Activated naive CD4-positive, alpha-beta T cell treated with anti-CD3 and anti-CD28 coated beads for 36 hours (primary cell): ENCODE measurements at regions of chr2 and their contacts with region 1.

Region 1: GRCh38 chr2:44955593-44956392 is 14.3 kb downstream of the SIX3 start:
- DNase-seq: peak; percentile 87
- H3K4me3 Mint-ChIP-seq: no peak overlapping the region
- H3K27ac Mint-ChIP-seq: no peak overlapping the region
- H3K4me1 Mint-ChIP-seq: peaks cover 18% of the 10 kb centered on the region
- H3K27me3 Mint-ChIP-seq: peaks cover 54% of the 10 kb centered on the region

Region 2: DNA sequence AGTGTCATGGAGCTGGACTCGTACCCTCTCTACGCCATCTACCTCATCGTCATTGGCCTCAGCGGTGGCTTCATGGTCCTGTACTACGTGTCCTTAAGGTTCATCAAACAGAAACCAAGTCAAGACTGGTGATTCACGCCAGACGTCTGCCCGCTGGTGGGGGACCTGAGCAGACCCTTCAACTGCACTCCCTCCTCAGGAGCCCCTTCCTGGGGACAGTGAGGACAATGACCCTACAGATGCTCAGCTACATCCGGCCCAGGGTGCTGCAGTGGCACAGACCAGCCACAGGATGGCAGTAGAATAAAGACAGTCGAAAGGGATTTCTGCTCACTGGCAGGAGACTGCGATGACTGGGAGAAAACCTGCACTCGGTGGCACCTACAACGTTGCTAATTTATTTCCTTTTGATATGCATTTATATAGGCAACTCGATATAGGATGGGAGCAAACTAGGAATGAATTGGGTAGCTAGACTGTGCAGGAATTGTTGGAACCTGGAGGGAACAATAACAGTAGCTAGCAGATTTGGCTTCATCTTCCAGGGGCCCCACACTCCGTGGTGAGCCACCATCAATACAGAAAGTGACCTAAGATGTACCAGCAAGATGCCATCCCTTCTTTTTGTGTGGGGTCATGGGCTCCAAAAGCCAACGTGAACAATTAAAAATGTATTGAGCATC is 1077.9 kb before region 1 on chr2:
- CTCF ChIA-PET with region 1: no interaction called
- intact Hi-C with region 1: loop called (anchors 10 kb)
- DNase-seq: peak; percentile 86
- H3K4me3 Mint-ChIP-seq: no peak overlapping the region
- H3K27ac Mint-ChIP-seq: no peak overlapping the region
- H3K4me1 Mint-ChIP-seq: peaks cover 3% of the 10 kb centered on the region
- H3K27me3 Mint-ChIP-seq: peaks cover 16% of the 10 kb centered on the region

Region 3: DNA sequence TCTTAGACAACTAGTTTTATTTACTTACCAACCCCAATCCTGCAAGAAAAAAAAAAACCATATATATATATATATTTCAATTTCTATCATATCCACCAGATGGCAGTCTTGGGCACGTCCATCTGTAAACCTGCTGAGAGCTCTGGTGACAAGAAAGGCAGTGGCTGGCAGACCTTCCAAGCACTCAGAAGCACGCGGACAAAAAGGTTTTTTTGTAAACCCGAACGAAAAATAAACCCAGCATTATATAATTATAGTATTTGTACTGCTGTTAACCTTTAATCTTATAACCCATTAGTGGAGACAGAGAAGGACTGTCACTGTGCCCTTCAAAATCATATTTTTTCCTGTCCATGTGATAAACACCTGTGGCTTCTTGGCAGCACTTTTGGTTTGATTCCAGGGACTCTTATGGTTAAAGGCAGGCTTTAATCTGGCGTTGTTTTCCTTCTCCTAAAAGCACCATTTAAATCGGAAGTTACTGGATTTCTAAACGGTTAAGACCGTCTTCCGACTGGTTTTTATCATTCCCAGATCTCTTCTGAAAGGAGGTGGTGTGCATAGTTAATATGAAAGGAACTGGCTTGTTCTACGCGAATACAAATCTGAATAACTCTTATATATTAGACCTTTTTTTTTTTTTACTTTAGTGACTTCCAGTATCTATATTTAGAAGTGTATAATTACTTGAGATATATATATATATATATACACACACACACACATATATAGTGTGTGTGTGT is 711.5 kb before region 1 on chr2:
- CTCF ChIA-PET with region 1: interaction called, 4 read pairs
- intact Hi-C with region 1: loop called (anchors 2 kb)
- DNase-seq: peak; percentile 69
- H3K4me3 Mint-ChIP-seq: peak overlapping the region; percentile 71
- H3K27ac Mint-ChIP-seq: no peak overlapping the region
- H3K4me1 Mint-ChIP-seq: peaks cover 21% of the 10 kb centered on the region
- H3K27me3 Mint-ChIP-seq: no peaks in the 10 kb centered on the region

Region 4: GRCh38 chr2:44560352-44560751 is 395.4 kb before region 1 on chr2:
- CTCF ChIA-PET with region 1: interaction called, 17 read pairs
- intact Hi-C with region 1: loop called (anchors 5 kb)
- DNase-seq: peak; percentile 51
- H3K4me3 Mint-ChIP-seq: no peak overlapping the region
- H3K27ac Mint-ChIP-seq: no peak overlapping the region
- H3K4me1 Mint-ChIP-seq: no peaks in the 10 kb centered on the region
- H3K27me3 Mint-ChIP-seq: no peaks in the 10 kb centered on the region

Region 5: DNA sequence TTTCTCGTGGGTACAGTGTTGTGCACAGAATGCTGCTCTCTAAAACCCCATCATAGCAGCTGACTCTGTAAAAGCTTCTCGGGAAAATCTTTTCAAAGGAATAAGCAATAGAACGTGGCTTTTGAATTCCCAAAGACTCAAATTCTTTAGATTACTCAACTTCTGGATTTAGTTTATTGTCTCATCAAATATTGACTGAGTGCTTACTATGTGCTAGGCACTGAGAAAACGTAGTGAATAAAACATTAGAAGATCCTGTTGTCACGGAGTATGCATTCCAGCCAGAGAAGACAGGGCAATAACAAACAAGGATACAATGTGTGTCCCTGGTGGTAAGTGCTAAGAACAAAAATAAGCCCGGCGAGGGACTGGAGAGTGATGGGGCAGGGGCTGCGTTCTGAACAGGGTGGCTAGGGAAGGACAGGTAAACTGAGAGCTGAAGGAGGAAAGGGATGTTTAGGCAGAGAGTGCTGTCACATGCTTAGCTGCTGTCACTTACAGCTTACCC is 192.5 kb before region 1 on chr2:
- CTCF ChIA-PET with region 1: no interaction called
- intact Hi-C with region 1: no loop called
- DNase-seq: no peak
- H3K4me3 Mint-ChIP-seq: no peak overlapping the region
- H3K27ac Mint-ChIP-seq: no peak overlapping the region
- H3K4me1 Mint-ChIP-seq: no peaks in the 10 kb centered on the region
- H3K27me3 Mint-ChIP-seq: no peaks in the 10 kb centered on the region

Region 6: DNA sequence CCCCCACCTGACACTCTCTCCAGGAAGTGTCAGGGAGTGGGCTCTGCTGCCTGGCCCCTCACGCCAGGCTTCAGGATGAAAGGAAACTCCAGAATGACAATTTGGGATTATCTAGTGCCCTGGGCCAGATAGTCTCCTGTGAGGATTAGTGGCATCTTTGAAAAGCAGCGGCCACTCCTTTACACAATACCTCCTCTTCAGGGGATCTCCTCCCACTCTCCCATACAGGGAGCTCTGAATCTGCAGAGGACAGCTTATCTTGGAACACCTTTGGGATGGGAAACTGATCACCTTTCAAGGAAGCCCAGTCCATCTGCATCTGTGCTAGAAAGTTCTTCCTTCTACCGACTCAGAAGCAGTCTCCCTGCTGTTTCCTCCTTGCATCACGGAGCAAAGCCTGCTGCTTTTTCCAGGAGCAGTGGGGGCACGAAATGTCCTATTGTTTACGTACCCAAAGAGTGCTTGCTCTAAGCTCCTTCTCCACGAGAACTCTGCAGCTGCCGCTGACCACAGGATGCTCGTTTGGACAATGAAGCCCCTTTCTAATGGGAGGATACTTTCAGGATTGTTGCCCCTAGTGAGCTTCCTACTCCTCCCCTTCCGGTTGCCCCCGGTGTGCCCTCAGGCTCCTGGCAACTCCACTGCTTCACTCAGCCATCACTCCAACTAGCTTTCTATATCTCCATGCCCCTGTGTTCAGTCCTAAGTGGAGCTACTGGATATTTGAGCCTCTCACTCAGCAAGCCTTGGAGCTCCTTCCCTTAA is 17.2 kb after region 1 on chr2:
- CTCF ChIA-PET with region 1: interaction called, 11 read pairs
- intact Hi-C with region 1: no loop called
- DNase-seq: no peak
- H3K4me3 Mint-ChIP-seq: no peak overlapping the region
- H3K27ac Mint-ChIP-seq: no peak overlapping the region
- H3K4me1 Mint-ChIP-seq: no peaks in the 10 kb centered on the region
- H3K27me3 Mint-ChIP-seq: peaks cover 12% of the 10 kb centered on the region